ENCODE measurements at regions of chr18 and their contacts with region 1.

Region 1: GRCh38 chr18:6120820-6121279 is 225.5 kb upstream of the TMEM200C start:
- DNase-seq: no peak
- ATAC-seq: peak; percentile 94

Region 2: DNA sequence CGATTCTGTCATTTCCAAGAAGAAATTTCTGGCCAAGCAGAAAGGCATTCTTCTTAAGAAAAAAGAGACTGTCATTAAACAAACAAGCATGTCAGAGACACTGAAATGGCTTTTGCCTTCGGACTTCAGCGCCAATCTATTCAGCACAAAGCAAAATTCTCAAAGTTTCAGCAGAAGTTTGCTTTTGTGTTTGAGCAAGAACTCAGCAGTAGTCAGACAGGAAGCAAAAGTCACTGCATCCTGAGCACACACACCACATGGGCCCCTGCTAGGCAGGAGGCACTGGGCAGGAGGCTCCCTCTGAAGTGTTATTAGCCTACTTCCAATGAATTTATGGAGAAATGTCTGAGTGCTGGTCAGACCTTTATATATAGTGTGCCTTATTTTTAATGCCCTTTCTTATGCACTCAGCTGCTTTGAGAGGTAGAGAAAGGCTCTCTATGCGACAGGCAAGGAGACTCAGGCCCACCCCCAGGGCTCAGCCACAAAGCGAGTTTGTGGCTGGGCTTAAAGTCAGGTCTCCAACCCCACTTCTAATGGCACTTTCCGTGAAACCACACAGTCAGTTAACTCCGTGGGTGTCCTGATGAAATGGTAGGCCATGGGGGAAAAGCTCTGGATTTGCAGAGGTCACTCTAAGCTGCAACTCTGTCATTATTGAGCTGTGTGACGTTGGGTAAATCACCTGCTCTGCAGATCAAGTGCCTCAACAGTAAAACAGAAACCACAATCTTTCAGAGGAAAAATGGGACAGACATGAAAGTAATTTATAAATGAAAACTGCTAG is 64.5 kb before region 1 on chr18:
- intact Hi-C with region 1: loop called (anchors 5 kb)
- DNase-seq: no peak
- ATAC-seq: no peak